ENCODE measurements at regions of chr14 and their contacts with region 1.

Region 1: GRCh38 chr14:57962325-57963035 is 96.6 kb upstream of the SLC35F4 start:
- DNase-seq: no peak
- H3K4me3 ChIP-seq: no peak overlapping the region
- H3K27ac ChIP-seq: peak overlapping the region; percentile 33 to 42
- H3K4me1 ChIP-seq: no peaks in the 10 kb centered on the region
- H3K27me3 ChIP-seq: no peaks in the 10 kb centered on the region
- CTCF ChIP-seq: peak in 1 of 4 experiments; percentile 9
- POLR2A ChIP-seq: no peak

Region 2: GRCh38 chr14:57811998-57812546 is 150.4 kb before region 1 on chr14:
- intact Hi-C with region 1: no loop called
- DNase-seq: no peak
- H3K4me3 ChIP-seq: no peak overlapping the region
- H3K27ac ChIP-seq: no peak overlapping the region
- H3K4me1 ChIP-seq: no peaks in the 10 kb centered on the region
- H3K27me3 ChIP-seq: no peaks in the 10 kb centered on the region
- CTCF ChIP-seq: no peak
- POLR2A ChIP-seq: no peak

Region 3: DNA sequence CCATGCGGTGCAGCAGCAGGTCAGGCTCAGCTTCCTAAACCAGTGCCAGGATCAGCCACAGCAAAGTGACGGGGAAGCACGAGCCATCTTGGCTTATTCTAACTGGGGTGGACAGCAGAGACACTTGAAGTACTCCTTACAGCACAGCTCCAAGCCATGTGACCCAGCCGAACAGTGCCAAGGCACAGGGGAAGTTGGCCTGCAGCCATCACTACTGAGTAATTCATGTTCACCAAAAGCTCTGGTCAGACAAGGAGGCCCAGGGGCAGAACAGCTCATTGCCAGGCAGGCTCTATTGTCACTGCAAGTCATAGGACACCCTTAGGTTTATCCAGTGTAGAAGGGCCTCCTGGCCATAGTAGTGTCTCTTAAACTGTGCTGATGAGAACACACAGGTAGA is 73.2 kb before region 1 on chr14:
- intact Hi-C with region 1: loop called (anchors 5 kb)
- DNase-seq: peak; percentile 9
- H3K4me3 ChIP-seq: no peak overlapping the region
- H3K27ac ChIP-seq: no peak overlapping the region
- H3K4me1 ChIP-seq: no peaks in the 10 kb centered on the region
- H3K27me3 ChIP-seq: no peaks in the 10 kb centered on the region
- CTCF ChIP-seq: no peak
- POLR2A ChIP-seq: no peak

Region 4: GRCh38 chr14:58002618-58003017 is 40.1 kb after region 1 on chr14:
- intact Hi-C with region 1: loop called (anchors 2 kb)
- DNase-seq: no peak
- H3K4me3 ChIP-seq: no peak overlapping the region
- H3K27ac ChIP-seq: no peak overlapping the region
- H3K4me1 ChIP-seq: no peaks in the 10 kb centered on the region
- H3K27me3 ChIP-seq: no peaks in the 10 kb centered on the region
- CTCF ChIP-seq: no peak
- POLR2A ChIP-seq: no peak

Region 5: DNA sequence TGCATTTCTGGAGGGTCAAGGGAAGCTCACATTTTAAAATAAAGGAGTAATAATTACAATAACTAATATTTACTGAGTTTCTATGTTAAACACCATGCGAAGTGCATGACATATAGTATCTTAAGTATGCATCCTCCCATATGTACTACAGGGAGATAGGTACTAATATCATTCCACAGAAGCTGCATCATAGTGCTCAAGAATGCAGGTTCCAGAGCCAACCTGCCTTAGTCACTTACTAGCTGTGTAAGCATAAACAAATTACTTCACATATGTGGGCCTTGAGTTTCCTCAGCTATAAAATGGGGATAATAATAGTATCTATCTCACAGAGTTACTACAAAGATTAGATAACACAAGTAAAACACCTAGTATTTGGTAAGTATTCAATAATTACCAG is 171.3 kb after region 1 on chr14:
- intact Hi-C with region 1: no loop called
- DNase-seq: no peak
- H3K4me3 ChIP-seq: no peak overlapping the region
- H3K27ac ChIP-seq: no peak overlapping the region
- H3K4me1 ChIP-seq: no peaks in the 10 kb centered on the region
- H3K27me3 ChIP-seq: no peaks in the 10 kb centered on the region
- CTCF ChIP-seq: no peak
- POLR2A ChIP-seq: no peak

Region 6: DNA sequence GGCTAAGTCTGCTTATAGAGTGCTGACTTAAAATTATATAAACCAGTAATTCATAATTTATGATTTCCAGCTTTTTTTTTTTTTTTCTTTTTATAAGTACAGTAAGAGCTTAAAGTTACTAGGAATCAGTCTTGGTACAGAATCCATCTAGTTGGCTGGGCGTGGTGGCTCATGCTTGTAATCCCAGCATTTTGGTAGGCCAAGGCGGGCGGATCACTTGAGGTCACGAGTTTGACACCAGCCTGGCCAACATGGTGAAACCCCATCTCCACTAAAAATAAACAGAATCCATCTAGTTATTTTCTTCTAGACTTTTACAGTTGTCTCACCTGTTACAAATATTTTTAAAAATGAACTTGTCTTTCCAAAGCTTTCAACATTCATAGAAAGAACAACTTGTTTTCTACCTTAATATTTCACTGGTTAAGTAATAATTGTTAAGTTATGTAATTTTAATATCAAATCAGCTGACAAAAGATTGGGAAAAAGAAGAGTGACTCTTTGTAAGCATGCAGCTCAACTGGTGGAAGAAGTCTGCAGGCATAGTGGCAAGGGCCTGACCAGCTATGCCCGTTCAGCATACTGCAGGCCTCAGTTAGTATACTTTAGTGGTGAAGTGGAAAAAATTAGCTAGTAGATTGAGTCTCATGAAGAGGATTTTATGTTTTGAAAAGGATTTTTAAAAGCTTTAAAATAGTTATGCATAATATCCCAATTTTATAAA is 264.8 kb after region 1 on chr14:
- intact Hi-C with region 1: no loop called
- DNase-seq: no peak
- H3K4me3 ChIP-seq: no peak overlapping the region
- H3K27ac ChIP-seq: no peak overlapping the region
- H3K4me1 ChIP-seq: no peaks in the 10 kb centered on the region
- H3K27me3 ChIP-seq: no peaks in the 10 kb centered on the region
- CTCF ChIP-seq: no peak
- POLR2A ChIP-seq: no peak

Measured in prostate gland (tissue), 2 donors.